ENCODE measurements at regions of chr2 and their contacts with region 1.

Region 1: DNA sequence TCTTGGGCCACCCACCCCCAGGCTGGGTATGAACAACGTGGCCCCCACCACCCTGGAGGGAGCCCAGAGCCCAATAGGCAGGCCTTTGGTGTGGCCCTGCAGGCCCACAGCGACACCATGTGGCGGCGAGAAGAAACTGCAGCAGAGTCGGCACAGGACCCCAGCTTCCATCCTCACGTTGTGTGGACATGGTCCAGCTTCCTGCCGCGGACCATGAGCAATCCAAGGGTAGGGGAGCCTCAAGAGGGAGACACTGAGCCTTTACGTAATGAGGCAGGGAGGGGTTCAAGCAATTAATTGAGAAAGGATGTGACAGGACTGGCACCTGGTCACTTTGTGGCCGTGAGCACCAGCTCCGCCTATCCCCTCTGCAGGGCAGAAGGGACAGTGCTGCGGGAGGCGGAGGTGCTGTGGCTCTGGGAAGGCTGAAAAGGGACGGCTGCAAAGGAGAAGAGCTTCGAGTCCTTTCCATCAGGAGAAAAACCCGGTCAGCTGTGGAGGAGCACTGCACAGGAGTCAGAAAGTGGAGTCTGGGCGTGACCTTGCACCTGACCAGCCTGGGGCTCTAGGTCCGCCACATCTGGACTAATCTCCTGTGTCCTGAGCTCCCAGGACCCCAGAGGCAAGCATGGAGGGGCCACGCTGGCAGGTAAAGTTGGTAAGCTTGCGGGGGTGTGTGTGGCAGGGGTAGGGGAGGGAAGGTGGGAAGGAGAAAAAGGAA is 44.8 kb downstream of the TMEM37 start:
- DNase-seq: no peak
- H3K4me3 ChIP-seq: no peak overlapping the region
- H3K27me3 ChIP-seq: peaks cover 2% of the 10 kb centered on the region
- CTCF ChIP-seq: peak; percentile 97

Region 2: DNA sequence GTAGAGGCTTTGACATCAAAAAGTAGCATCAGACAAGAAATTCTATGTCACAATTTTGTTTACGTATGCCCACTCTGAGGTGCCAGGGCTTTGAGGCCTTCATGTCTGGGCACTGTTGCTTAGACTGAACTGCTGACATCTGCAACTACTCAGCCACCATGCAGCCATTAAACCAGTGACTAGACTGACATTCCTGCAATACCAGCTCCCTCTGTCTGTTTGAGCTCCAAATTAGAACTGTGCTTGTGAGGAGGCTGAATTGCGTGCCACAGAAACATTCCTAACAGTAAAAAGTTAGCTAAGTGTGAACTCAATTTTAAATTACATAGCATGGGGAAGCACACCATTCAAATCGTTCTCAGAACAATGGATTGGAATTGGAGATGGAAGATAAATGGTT is 1225.0 kb before region 1 on chr2:
- CTCF ChIA-PET with region 1: no interaction called
- POLR2A ChIA-PET with region 1: no interaction called
- DNase-seq: peak; percentile 70
- H3K4me3 ChIP-seq: no peak overlapping the region
- H3K27me3 ChIP-seq: no peaks in the 10 kb centered on the region
- CTCF ChIP-seq: no peak

Region 3: GRCh38 chr2:119407430-119408220 is 68.8 kb before region 1 on chr2:
- CTCF ChIA-PET with region 1: interaction called, 112 read pairs
- POLR2A ChIA-PET with region 1: no interaction called
- DNase-seq: no peak
- H3K4me3 ChIP-seq: no peak overlapping the region
- H3K27me3 ChIP-seq: peaks cover 2% of the 10 kb centered on the region; the same call in 1 of the 2 replicates
- CTCF ChIP-seq: peak; percentile 71

Region 4: DNA sequence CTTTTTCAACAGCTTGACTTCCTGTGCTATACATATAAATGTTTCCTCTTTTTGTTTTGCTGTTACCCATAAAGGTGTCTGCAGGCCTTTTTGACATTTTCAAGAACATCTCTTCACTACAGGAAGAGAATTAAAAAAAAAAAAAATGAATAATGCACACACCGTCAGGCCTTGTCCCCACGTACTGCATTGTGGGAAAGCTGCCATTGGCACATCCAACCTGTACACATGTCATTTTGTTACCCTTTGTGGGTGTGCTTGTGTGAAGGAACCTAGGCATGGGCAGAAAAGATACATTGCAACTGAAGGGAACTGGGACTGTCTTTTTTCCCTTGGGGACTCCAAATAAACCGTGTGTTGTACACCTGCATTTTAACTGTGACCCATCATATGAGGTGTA is 61.6 kb before region 1 on chr2:
- CTCF ChIA-PET with region 1: interaction called, 58 read pairs
- POLR2A ChIA-PET with region 1: no interaction called
- DNase-seq: no peak
- H3K4me3 ChIP-seq: no peak overlapping the region
- H3K27me3 ChIP-seq: no peaks in the 10 kb centered on the region
- CTCF ChIP-seq: no peak

Region 5: GRCh38 chr2:119463051-119463510 is 13.4 kb before region 1 on chr2:
- CTCF ChIA-PET with region 1: interaction called, 23 read pairs
- POLR2A ChIA-PET with region 1: no interaction called
- DNase-seq: no peak
- H3K4me3 ChIP-seq: no peak overlapping the region
- H3K27me3 ChIP-seq: no peaks in the 10 kb centered on the region; the same call in 1 of the 2 replicates
- CTCF ChIP-seq: no peak

Region 6: DNA sequence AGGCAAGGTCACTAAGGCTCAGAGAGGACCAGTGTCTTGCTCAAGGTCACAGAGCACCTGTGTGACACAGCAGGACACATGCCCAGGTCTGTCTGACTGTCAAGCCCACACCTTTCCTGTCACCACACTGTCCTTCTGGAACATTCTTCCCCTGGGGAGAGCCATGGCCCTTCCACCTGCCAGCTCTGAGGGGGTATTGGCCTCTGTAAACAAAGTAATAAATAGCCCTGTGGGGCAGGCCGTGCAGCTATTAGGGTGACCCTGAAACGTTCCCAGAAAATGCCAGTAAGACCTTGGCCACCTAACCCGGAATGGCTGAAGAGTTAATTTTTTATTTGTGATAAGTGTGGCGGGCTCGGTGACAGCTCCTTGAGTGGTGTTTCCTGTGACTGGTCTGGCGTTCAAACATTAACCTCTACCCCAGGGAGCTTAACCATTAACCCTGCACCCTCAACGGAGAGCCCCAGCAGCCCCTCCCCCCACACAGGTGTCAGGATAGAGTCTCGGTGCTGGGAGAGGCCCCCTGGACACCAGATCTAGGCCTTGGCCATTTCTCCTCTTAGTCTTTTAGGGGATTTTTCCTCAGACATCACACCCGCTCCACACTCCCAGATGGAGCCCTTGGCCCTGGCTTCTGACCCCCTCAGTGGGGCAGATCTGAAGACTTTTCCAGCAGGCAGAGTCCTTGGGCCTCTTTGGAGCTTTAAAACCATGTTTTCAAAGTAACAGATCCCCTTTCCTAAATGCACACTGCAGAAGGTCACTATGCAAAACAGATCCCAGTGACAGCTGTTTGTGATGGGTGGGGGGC is 11.2 kb after region 1 on chr2:
- CTCF ChIA-PET with region 1: interaction called, 59 read pairs
- POLR2A ChIA-PET with region 1: no interaction called
- DNase-seq: no peak
- H3K4me3 ChIP-seq: no peak overlapping the region
- H3K27me3 ChIP-seq: no peaks in the 10 kb centered on the region; the same call in 1 of the 2 replicates
- CTCF ChIP-seq: no peak

Region 7: DNA sequence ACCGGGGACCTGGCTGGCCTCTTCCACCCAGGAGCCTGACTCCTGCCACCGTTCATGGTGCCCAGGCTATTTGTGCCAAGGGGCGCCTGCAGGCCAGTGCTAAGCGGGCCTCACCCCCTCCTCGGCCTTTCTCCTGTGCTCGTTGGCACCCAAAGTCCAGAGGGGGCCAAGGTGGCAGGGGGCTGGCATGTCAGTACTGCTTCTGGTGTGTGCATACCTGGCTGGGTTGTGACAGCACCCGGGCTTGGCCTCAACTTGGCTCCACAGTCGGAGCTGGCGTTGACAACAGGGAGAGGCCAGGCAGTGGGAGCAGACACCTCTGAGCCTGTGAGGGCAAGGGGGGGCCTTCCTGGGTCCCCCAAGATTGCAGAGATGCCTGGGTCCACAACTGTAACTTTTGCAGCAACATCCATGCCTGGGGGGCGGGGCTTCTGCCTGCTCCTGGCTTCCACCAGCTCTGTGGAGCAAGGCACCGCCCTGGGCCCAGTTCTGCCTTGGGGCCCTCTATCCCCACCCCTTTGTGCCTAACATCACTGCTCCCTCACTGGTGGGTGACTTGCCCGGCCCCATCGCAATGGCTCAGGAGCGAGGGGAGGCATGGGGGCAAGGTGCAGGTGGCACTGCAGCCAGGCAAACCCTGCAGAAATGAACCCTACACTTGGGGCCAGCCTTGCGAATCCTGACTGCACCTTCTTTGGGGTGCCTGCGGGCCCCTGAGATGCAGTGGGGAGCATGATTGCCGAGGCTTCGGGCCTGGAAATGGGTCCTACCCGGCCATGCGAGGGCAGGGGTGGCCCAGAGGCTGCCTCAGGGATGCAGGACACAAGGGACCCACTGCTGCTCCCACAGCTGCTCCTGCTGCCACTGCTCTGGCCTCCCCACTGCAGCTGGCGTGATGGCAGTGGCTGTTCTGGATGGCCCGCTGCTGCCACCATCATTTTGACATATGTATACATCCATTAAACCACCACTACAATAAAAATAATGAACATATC is 319.1 kb after region 1 on chr2:
- CTCF ChIA-PET with region 1: no interaction called
- POLR2A ChIA-PET with region 1: no interaction called
- DNase-seq: no peak
- H3K4me3 ChIP-seq: no peak overlapping the region
- H3K27me3 ChIP-seq: no peaks in the 10 kb centered on the region
- CTCF ChIP-seq: no peak

Region 8: DNA sequence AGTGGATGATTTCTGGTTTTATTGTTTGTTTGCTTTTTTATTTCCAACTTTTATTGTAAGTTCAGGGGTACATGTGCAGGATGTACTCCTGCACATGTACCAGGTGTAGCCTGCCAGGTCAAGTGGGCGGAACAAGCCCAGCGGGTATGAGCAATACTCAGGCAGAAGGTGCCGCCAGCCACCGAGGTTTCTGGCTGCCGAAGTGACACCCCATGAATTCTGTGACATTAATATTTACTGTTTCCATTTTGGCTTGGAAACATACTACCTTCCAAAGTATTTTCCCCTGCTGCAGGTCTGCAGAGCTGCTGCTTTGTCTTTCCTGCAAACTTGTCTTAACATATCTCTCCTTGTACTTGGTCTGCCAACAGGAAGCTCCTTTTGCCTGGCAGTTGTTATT is 361.7 kb after region 1 on chr2:
- CTCF ChIA-PET with region 1: no interaction called
- POLR2A ChIA-PET with region 1: no interaction called
- DNase-seq: no peak
- H3K4me3 ChIP-seq: no peak overlapping the region
- H3K27me3 ChIP-seq: no peaks in the 10 kb centered on the region
- CTCF ChIP-seq: no peak

Region 9: GRCh38 chr2:119873350-119874315 is 397.2 kb after region 1 on chr2:
- CTCF ChIA-PET with region 1: no interaction called
- POLR2A ChIA-PET with region 1: no interaction called
- DNase-seq: no peak
- H3K4me3 ChIP-seq: no peak overlapping the region
- H3K27me3 ChIP-seq: no peaks in the 10 kb centered on the region
- CTCF ChIP-seq: no peak

Measured in BJ (cell line).